H1 (cell line): ENCODE measurements at regions of chr3 and their contacts with region 1.

Region 1: GRCh38 chr3:173513123-173513522 is 115.6 kb downstream of the NLGN1 start:
- DNase-seq: no peak
- H3K4me3 ChIP-seq: no peak overlapping the region
- H3K27ac ChIP-seq: no peak overlapping the region
- H3K4me1 ChIP-seq: no peaks in the 10 kb centered on the region
- H3K27me3 ChIP-seq: no peaks in the 10 kb centered on the region
- CTCF ChIP-seq: no peak
- EP300 ChIP-seq: no peak
- POLR2A ChIP-seq: no peak
- RAD21 ChIP-seq: no peak

Region 2: DNA sequence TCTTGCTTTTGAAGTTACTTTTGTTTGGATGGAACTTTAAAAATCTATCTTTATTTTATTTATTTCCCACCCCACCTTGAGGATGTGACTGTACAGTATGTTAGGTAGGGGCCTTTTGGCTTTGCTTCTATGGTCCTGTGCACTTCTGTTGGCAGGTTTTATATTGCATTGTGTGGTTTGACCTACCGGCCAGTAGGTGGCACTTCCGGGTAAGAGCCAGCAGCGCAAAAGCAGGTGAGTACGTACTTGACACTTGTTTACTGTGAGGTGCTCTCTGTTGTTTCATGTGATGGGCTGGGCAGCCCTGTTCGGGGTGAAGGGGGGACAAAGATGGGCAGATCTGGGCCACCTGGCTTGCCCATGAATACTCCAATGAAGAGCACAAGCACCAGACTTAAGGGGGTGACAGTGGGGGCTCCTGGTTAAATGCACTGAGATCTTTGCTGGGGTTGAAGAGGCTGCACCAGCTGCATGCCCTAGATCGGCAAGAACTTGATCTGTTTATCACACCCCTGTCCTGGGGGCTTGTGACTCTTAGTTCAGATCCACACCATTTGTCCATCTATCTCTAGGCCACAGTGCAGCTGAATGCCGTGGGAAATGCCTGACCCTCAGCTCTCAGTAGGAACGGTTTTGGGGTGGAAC is 16.1 kb after region 1 on chr3:
- CTCF ChIA-PET with region 1: interaction called, 22 read pairs
- POLR2A ChIA-PET with region 1: interaction called, 3 read pairs
- DNase-seq: peak in 1 of 2 experiments; percentile 29
- H3K4me3 ChIP-seq: no peak overlapping the region
- H3K27ac ChIP-seq: no peak overlapping the region
- H3K4me1 ChIP-seq: no peaks in the 10 kb centered on the region
- H3K27me3 ChIP-seq: no peaks in the 10 kb centered on the region
- CTCF ChIP-seq: peak; percentile 86 to 94 (median 91)
- EP300 ChIP-seq: no peak
- POLR2A ChIP-seq: no peak
- RAD21 ChIP-seq: peak; percentile 72 to 86